Left lung (tissue), 14 donors: ENCODE measurements at regions of chr12 and their contacts with region 1.

Region 1: GRCh38 chr12:68414988-68415387 is 82.8 kb upstream of the MDM1 start:
- DNase-seq: no peak
- ATAC-seq: no peak
- H3K4me3 ChIP-seq: no peak overlapping the region
- H3K27ac ChIP-seq: no peak overlapping the region
- H3K4me1 ChIP-seq: peaks cover 0 to 7% of the 10 kb centered on the region in 2 donors
- H3K27me3 ChIP-seq: no peaks in the 10 kb centered on the region
- CTCF ChIP-seq: no peak

Region 2: DNA sequence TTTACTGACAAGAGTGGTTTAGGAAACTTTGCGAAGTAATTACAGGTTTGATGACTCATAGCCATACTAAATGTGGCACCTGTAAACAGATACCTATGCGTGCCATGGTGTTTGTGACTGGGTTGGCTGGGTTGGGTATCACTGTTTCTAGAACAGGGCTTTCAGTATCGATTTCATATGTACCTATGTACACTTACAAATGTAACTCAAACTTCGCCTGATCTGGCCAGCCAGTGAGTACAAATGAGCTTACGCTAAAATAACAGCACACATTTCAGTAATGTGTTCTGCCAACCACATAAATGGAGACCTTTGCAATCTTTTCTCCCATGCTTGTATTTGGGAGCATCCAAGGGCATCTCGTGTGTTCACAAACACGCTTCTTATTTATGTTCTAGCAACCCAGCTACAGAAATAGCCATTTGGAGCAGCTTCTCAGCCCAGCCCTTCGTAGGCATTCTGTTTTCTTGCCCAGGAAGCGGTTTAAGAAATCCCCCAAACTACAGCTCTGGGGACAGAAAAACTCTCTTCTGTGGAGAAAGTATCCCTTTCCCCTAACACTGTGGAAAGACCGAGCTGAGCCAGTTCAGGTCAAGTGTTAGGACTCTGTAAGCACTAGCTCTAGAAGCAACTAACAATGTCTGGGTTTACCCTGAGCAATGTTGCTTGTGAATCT is 40.5 kb before region 1 on chr12:
- intact Hi-C with region 1: loop called in 1 of 2 experiments (anchors 5 kb)
- DNase-seq: no peak
- ATAC-seq: no peak
- H3K4me3 ChIP-seq: no peak overlapping the region
- H3K27ac ChIP-seq: peak overlapping the region in 1 of 2 donors; percentile 13
- H3K4me1 ChIP-seq: peaks cover 0 to 58% of the 10 kb centered on the region in 2 donors
- H3K27me3 ChIP-seq: no peaks in the 10 kb centered on the region
- CTCF ChIP-seq: no peak